AG04450 (cell line): ENCODE measurements at regions of chr1 and their contacts with region 1.

Region 1: DNA sequence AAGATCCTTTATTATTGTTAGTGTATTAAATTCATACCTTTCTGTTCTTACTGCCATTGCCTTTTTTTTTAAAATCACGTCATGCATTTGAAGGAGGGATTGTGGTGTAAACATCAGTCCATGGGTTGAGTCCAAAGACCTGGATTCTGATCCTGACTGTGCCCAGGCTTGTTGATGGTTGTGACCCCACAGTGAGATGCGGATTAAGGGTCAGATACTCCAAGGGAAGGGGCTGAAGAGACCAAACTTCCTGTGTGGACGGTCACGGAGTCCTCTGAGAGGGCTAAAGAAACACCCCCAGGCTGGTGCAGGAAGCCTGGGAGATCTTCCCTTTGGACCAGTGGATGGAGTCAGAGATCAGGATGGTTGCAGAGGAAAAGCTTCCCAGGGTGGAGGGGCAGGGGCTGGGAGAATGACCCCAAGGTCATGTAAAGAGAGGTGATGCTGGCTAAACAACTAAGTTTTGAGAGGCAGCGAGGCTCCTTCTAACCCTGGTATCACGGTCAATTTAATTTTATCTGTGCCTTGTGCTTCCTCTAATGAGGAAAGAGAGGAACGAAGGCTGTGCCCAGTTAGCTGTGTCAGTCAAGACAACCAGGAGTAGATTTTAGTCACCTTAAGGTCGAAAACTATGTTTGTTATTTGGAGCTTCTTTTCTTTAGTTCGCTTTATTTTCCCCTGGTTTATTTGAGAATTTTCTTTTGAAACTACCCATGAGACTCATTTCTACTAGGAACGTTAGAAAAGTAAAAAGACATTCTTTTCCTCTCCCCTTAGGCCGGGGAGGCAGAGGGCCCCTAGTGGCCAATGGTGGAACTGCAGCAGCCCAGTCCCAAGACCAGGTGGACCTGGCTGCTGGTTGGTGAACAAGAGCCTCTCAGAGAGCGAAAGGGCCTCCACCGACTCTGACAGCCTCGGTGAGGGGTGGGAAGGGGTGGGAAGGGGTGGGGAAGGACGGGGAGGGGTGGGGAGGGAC is 8.7 kb upstream of the GPR161 start:
- DNase-seq: peak; percentile 70
- H3K4me3 ChIP-seq: no peak overlapping the region
- H3K27ac ChIP-seq: no peak overlapping the region
- H3K27me3 ChIP-seq: no peaks in the 10 kb centered on the region
- CTCF ChIP-seq: peak; percentile 100

Region 2: GRCh38 chr1:167950569-167950968 is 194.9 kb before region 1 on chr1:
- CTCF ChIA-PET with region 1: no interaction called
- POLR2A ChIA-PET with region 1: no interaction called
- DNase-seq: no peak
- H3K4me3 ChIP-seq: no peak overlapping the region
- H3K27ac ChIP-seq: no peak overlapping the region
- H3K27me3 ChIP-seq: no peaks in the 10 kb centered on the region
- CTCF ChIP-seq: no peak

Region 3: DNA sequence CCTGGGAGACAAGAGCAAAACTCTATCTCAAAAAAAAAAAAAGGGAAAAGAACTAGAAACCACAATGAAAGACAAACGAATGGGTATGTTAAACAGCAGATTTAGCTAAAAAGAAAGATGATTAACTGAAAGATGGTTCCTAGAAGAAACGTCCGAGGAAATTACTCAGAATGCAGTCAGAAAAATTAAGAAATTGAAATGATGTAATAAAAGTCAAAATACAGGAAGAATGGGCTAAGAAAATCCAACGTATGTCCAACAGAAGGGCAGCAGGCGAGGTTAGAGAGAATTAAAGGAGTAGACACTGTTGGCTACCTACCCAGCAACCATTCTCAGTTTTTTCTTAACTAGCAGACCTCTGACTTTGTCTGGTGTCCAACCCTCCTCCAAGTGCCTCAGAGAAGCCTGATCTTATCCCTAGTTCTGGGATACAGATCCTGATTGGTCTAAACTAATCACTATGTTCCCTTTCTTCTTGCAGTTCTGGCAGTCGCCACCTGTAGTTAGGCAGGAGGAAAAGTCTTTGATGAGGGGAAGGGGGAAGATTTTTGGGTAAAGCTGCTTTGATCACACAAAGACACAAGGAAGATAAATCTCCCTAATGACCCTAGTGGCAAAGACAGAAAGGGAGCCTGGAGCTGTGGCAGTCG is 34.5 kb before region 1 on chr1:
- CTCF ChIA-PET with region 1: interaction called, 10 read pairs
- POLR2A ChIA-PET with region 1: no interaction called
- DNase-seq: no peak
- H3K4me3 ChIP-seq: no peak overlapping the region
- H3K27ac ChIP-seq: no peak overlapping the region
- H3K27me3 ChIP-seq: no peaks in the 10 kb centered on the region
- CTCF ChIP-seq: no peak

Region 4: GRCh38 chr1:168121401-168122011 is 24.0 kb before region 1 on chr1:
- CTCF ChIA-PET with region 1: interaction called, 14 read pairs
- POLR2A ChIA-PET with region 1: no interaction called
- DNase-seq: peak; percentile 80
- H3K4me3 ChIP-seq: no peak overlapping the region
- H3K27ac ChIP-seq: peak overlapping the region; percentile 92
- H3K27me3 ChIP-seq: no peaks in the 10 kb centered on the region
- CTCF ChIP-seq: no peak

Region 5: DNA sequence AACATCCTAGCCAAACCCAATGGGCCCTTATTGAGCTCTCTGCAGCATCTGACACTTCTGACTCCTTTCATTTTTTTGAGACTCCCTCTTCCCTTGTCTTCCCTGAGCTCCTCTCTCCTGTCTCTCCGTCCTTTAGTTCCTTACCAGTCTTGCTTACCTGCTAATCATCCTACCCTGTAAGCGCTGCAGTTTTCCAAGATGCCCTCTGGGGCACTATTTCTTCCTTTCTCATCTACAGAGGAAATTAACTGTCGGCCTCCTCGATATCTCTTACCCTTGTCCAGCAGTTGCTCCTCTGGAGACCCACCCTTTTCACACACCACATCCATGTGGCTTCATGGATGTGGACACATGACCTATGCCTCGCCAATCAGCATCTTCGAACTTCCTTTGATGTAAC is 15.5 kb before region 1 on chr1:
- CTCF ChIA-PET with region 1: interaction called, 26 read pairs
- POLR2A ChIA-PET with region 1: no interaction called
- DNase-seq: no peak
- H3K4me3 ChIP-seq: no peak overlapping the region
- H3K27ac ChIP-seq: no peak overlapping the region
- H3K27me3 ChIP-seq: no peaks in the 10 kb centered on the region
- CTCF ChIP-seq: no peak

Region 6: DNA sequence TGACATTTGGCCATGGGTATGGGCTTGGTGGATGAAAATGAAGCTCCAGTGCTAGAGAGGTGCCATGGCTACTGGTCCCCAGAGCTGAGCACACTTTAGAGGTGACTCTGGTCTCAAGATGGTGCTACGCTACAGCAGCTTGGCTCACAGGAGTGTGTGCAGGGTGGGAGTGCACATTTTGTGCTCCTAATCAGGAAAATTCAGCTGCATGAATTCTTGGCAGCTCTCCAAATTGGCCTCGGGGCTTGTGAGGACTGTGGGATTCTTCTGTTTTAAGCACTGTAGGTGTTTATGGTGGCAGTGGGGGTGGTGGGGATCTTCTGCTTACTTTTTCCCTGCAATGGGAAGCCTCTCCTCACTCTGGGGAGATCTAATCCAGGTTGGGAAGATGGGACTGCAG is 16.0 kb after region 1 on chr1:
- CTCF ChIA-PET with region 1: interaction called, 24 read pairs
- POLR2A ChIA-PET with region 1: no interaction called
- DNase-seq: no peak
- H3K4me3 ChIP-seq: no peak overlapping the region
- H3K27ac ChIP-seq: no peak overlapping the region
- H3K27me3 ChIP-seq: no peaks in the 10 kb centered on the region
- CTCF ChIP-seq: no peak

Region 7: DNA sequence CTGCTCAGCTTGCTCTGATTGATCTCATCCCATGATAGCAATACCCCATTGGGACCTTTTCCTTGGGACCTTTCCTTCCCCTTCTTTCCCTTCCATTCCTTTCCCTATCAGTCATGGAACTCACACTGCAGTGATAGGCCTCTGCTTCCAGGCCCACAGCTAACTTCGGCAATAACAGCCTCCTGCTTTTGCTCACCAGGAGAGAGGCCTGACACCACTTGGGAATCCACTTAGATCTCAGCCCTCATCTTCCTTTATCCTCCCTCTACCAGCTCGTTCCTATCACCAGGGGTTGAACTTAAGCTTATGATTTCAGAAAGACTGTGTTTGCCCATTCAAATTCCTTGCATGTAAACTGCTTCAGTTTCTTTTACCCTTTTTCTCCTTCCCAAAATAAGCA is 22.3 kb after region 1 on chr1:
- CTCF ChIA-PET with region 1: interaction called, 20 read pairs
- POLR2A ChIA-PET with region 1: no interaction called
- DNase-seq: no peak
- H3K4me3 ChIP-seq: no peak overlapping the region
- H3K27ac ChIP-seq: no peak overlapping the region
- H3K27me3 ChIP-seq: no peaks in the 10 kb centered on the region
- CTCF ChIP-seq: no peak

Region 8: DNA sequence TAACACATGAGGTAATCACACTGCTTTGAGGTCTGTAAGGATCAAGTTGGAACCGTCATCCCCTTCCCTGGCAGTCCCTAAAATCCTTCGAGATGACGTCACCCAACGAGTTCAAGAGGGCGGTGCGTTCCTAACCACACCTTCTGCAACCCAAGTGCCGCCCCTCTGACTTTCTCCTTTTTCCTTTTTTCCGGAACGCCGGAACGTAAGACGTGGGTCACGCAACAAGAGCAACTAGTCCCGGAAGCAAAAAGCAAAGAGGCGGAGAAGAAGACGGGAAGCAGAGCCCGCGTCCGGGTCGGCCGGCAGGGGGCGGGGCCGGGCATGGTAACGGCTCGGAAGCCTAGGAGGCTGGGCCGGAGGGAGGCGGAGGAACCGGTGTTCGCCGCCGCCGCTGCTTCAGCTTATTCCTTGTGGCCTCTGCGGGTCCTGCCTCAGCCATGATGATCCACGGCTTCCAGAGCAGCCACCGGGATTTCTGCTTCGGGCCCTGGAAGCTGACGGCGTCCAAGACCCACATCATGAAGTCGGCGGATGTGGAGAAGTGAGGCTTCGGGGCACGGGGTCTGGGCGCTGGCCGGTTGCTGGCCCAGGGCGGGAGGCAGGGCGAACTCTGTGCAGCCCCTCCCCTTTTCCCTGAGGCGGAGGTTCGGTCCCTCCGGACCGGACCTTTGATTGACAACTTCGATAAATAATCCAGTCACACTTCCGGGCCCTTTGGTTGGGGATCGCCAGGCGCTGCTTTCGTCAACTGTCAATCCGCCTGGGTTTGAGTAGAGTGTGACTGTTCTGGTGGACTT is 33.4 kb after region 1 on chr1 and contains the start of gene TIPRL:
- CTCF ChIA-PET with region 1: interaction called, 10 read pairs
- POLR2A ChIA-PET with region 1: no interaction called
- DNase-seq: peak; percentile 98
- H3K4me3 ChIP-seq: peak within 1 kb of the TSS; percentile 93
- H3K27ac ChIP-seq: peak within 1 kb of the TSS; percentile 87
- H3K27me3 ChIP-seq: no peaks in the 10 kb centered on the region
- CTCF ChIP-seq: peak; percentile 64
- polyA plus RNA-seq, gene TIPRL: 40.3 and 52.9 TPM in 2 replicates

Region 9: GRCh38 chr1:168210312-168210711 is 64.8 kb after region 1 on chr1:
- CTCF ChIA-PET with region 1: no interaction called
- POLR2A ChIA-PET with region 1: no interaction called
- DNase-seq: no peak
- H3K4me3 ChIP-seq: no peak overlapping the region
- H3K27ac ChIP-seq: no peak overlapping the region
- H3K27me3 ChIP-seq: no peaks in the 10 kb centered on the region
- CTCF ChIP-seq: no peak

Region 10: GRCh38 chr1:168365719-168366479 is 220.4 kb after region 1 on chr1:
- CTCF ChIA-PET with region 1: no interaction called
- POLR2A ChIA-PET with region 1: no interaction called
- DNase-seq: no peak
- H3K4me3 ChIP-seq: no peak overlapping the region
- H3K27ac ChIP-seq: no peak overlapping the region
- H3K27me3 ChIP-seq: peaks cover 3% of the 10 kb centered on the region
- CTCF ChIP-seq: no peak